B cell (primary cell): ENCODE measurements at regions of chr9 and their contacts with region 1.

Region 1: GRCh38 chr9:114397848-114398605 is 10.2 kb upstream of the AKNA start:
- DNase-seq: peak; percentile 98
- ATAC-seq: peak; percentile 76
- H3K4me3 ChIP-seq: peak overlapping the region; percentile 55 to 99 (median 93)
- H3K4me3 Mint-ChIP-seq: peak overlapping the region; percentile 93
- H3K27ac ChIP-seq: peak overlapping the region; percentile 99
- H3K27ac Mint-ChIP-seq: peak overlapping the region; percentile 94
- H3K4me1 ChIP-seq: peaks cover 42 to 54% of the 10 kb centered on the region in 2 donors
- H3K4me1 Mint-ChIP-seq: peaks cover 42% of the 10 kb centered on the region
- H3K27me3 ChIP-seq: no peaks in the 10 kb centered on the region
- H3K27me3 Mint-ChIP-seq: no peaks in the 10 kb centered on the region
- CTCF ChIP-seq: peak; percentile 14

Region 2: DNA sequence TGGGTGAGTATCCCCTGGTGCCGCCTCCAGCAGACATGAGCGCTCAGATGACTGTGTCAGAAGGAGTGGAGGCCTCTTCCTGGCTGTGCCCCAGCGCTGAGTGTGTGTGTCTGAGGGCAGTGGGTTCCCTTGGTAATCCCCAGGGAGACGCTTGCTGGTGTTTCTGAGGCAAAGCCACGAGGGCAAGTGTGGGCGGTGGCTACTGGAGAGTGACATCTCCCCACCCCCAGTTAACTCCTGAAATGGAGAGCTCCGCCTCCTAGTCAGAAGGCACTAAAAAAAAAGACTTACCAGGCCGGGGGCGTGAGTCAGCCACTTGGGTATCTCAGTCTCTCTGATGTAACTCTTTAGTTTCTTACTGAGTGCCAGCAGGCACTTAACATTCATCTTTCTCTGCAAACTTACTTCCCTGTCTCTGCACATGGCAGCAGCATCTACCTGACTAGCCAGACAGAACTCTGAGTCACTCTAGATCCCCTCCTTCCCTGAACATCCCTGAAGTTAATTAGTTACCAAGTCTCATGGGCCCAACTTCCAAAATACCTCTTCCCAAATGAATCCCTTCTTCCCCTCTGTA is 49.0 kb before region 1 on chr9:
- CTCF ChIA-PET with region 1: interaction called, 91 read pairs
- POLR2A ChIA-PET with region 1: interaction called, 5 read pairs
- intact Hi-C with region 1: loop called (anchors 1 kb)
- DNase-seq: peak; percentile 91
- ATAC-seq: peak; percentile 94
- H3K4me3 ChIP-seq: no peak overlapping the region
- H3K4me3 Mint-ChIP-seq: peak overlapping the region; percentile 83
- H3K27ac ChIP-seq: peak overlapping the region; percentile 68 to 80
- H3K27ac Mint-ChIP-seq: peak overlapping the region; percentile 97
- H3K4me1 ChIP-seq: peaks cover 26 to 36% of the 10 kb centered on the region in 2 donors
- H3K4me1 Mint-ChIP-seq: peaks cover 44% of the 10 kb centered on the region
- H3K27me3 ChIP-seq: no peaks in the 10 kb centered on the region
- H3K27me3 Mint-ChIP-seq: no peaks in the 10 kb centered on the region
- CTCF ChIP-seq: no peak

Region 3: GRCh38 chr9:114372921-114373448 is 25.0 kb before region 1 on chr9:
- CTCF ChIA-PET with region 1: interaction called, 8 read pairs
- POLR2A ChIA-PET with region 1: interaction called, 45 read pairs
- intact Hi-C with region 1: loop called (anchors 1 kb)
- DNase-seq: peak; percentile 96
- ATAC-seq: peak; percentile 93
- H3K4me3 ChIP-seq: peak overlapping the region in 3 of 5 experiments; percentile 13 to 33 (median 19)
- H3K4me3 Mint-ChIP-seq: peak overlapping the region; percentile 79
- H3K27ac ChIP-seq: peak overlapping the region; percentile 92 to 95
- H3K27ac Mint-ChIP-seq: peak overlapping the region; percentile 97
- H3K4me1 ChIP-seq: peaks cover 86 to 96% of the 10 kb centered on the region in 2 donors
- H3K4me1 Mint-ChIP-seq: peaks cover 91% of the 10 kb centered on the region
- H3K27me3 ChIP-seq: no peaks in the 10 kb centered on the region
- H3K27me3 Mint-ChIP-seq: no peaks in the 10 kb centered on the region
- CTCF ChIP-seq: no peak

Region 4: GRCh38 chr9:114452219-114453165 is 54.5 kb after region 1 on chr9:
- CTCF ChIA-PET with region 1: interaction called, 3 read pairs
- POLR2A ChIA-PET with region 1: no interaction called
- intact Hi-C with region 1: loop called (anchors 1 kb)
- DNase-seq: peak; percentile 82
- ATAC-seq: peak; percentile 46
- H3K4me3 ChIP-seq: peak overlapping the region in 3 of 5 experiments; percentile 1 to 44 (median 6)
- H3K4me3 Mint-ChIP-seq: peak overlapping the region; percentile 80
- H3K27ac ChIP-seq: peak overlapping the region; percentile 87 to 92
- H3K27ac Mint-ChIP-seq: peak overlapping the region; percentile 97
- H3K4me1 ChIP-seq: peaks cover 57 to 58% of the 10 kb centered on the region in 2 donors
- H3K4me1 Mint-ChIP-seq: peaks cover 57% of the 10 kb centered on the region
- H3K27me3 ChIP-seq: no peaks in the 10 kb centered on the region
- H3K27me3 Mint-ChIP-seq: no peaks in the 10 kb centered on the region
- CTCF ChIP-seq: no peak

Region 5: GRCh38 chr9:114611516-114612271 is 213.7 kb after region 1 on chr9:
- CTCF ChIA-PET with region 1: no interaction called
- POLR2A ChIA-PET with region 1: interaction called, 3 read pairs
- intact Hi-C with region 1: loop called (anchors 1 kb)
- DNase-seq: no peak
- ATAC-seq: peak; percentile 61
- H3K4me3 ChIP-seq: peak overlapping the region; percentile 86 to 98 (median 88)
- H3K4me3 Mint-ChIP-seq: peak overlapping the region; percentile 95
- H3K27ac ChIP-seq: peak overlapping the region; percentile 82 to 89
- H3K27ac Mint-ChIP-seq: peak overlapping the region; percentile 84
- H3K4me1 ChIP-seq: peaks cover 65 to 73% of the 10 kb centered on the region in 2 donors
- H3K4me1 Mint-ChIP-seq: peaks cover 69% of the 10 kb centered on the region
- H3K27me3 ChIP-seq: no peaks in the 10 kb centered on the region
- H3K27me3 Mint-ChIP-seq: no peaks in the 10 kb centered on the region
- CTCF ChIP-seq: no peak